ENCODE measurements at regions of chr2 and their contacts with region 1.

Region 1: DNA sequence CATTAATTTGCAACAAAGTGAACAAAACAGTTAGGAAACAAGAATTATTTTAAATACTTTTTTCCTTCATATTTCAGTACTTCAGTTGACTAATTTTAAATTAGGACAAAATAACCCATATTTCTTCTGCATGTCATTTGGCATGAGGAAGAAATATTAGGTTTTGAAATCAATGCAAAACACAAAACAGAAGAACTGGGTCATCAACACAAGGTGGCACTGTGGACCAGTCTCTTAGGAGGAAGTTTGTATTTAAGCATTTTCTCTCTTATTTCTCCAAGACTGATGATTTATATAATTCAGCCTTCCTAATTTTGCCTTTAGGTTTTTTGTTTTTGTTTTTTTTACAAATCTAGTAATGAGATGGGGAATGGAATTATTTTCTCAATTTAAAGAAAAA is 352.8 kb upstream of the KCNH7 start:
- DNase-seq: peak; percentile 50
- ATAC-seq: peak; percentile 46; the same call in 1 of the 2 replicates
- H3K4me3 ChIP-seq: no peak overlapping the region
- H3K27ac ChIP-seq: no peak overlapping the region
- H3K4me1 ChIP-seq: no peaks in the 10 kb centered on the region
- H3K27me3 ChIP-seq: no peaks in the 10 kb centered on the region
- CTCF ChIP-seq: peak; percentile 67
- POLR2A ChIP-seq: no peak
- RAD21 ChIP-seq: peak; percentile 73

Region 2: DNA sequence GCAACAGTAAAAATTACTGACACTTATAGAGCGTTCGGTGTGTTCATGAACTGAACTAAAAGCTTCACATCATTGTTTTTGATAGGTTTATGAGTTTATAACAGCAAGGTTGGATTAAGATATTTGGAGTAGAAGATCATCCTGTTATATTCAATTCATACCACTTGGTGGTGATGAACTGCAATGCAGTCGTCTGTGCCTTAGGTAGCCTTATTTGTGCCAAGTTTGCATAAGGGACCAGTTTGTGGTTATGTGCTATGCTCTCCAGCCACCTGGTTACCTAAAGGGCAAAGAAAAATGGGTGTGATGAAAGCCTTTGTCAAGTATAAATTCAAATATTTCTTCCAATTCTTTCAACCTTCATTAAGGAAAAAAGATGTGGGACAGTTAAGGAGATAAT is 201.9 kb before region 1 on chr2:
- CTCF ChIA-PET with region 1: no interaction called
- POLR2A ChIA-PET with region 1: no interaction called
- dilution Hi-C with region 1: no loop called
- in situ Hi-C with region 1: no loop called
- intact Hi-C with region 1: no loop called
- DNase-seq: no peak
- ATAC-seq: no peak
- H3K4me3 ChIP-seq: no peak overlapping the region
- H3K27ac ChIP-seq: no peak overlapping the region
- H3K4me1 ChIP-seq: no peaks in the 10 kb centered on the region
- H3K27me3 ChIP-seq: no peaks in the 10 kb centered on the region
- CTCF ChIP-seq: no peak
- POLR2A ChIP-seq: no peak
- RAD21 ChIP-seq: no peak

Region 3: GRCh38 chr2:163213661-163214389 is 22.5 kb after region 1 on chr2:
- CTCF ChIA-PET with region 1: no interaction called
- POLR2A ChIA-PET with region 1: no interaction called
- dilution Hi-C with region 1: no loop called
- in situ Hi-C with region 1: no loop called
- intact Hi-C with region 1: no loop called
- DNase-seq: peak; percentile 68
- ATAC-seq: peak; percentile 53
- H3K4me3 ChIP-seq: no peak overlapping the region
- H3K27ac ChIP-seq: no peak overlapping the region
- H3K4me1 ChIP-seq: no peaks in the 10 kb centered on the region
- H3K27me3 ChIP-seq: peaks cover under 1% of the 10 kb centered on the region; the same call in 1 of the 2 replicates
- CTCF ChIP-seq: no peak
- POLR2A ChIP-seq: no peak
- RAD21 ChIP-seq: no peak

Region 4: GRCh38 chr2:163735685-163736432 is 544.5 kb after region 1 on chr2 and contains the start of gene FIGN:
- CTCF ChIA-PET with region 1: no interaction called
- POLR2A ChIA-PET with region 1: no interaction called
- dilution Hi-C with region 1: no loop called
- in situ Hi-C with region 1: no loop called
- intact Hi-C with region 1: loop called (anchors 5 kb)
- DNase-seq: peak; percentile 82
- ATAC-seq: peak; percentile 88
- H3K4me3 ChIP-seq: peak within 1 kb of the TSS; percentile 55
- H3K27ac ChIP-seq: peak within 1 kb of the TSS; percentile 81
- H3K4me1 ChIP-seq: peaks cover 2% of the 10 kb centered on the region
- H3K27me3 ChIP-seq: peaks cover 3% of the 10 kb centered on the region; the same call in 1 of the 2 replicates
- CTCF ChIP-seq: no peak
- POLR2A ChIP-seq: peak; percentile 70; the same call in 1 of the 2 replicates
- RAD21 ChIP-seq: no peak
- total RNA-seq, gene FIGN: 0.56 and 0.90 TPM in 2 replicates

Region 5: DNA sequence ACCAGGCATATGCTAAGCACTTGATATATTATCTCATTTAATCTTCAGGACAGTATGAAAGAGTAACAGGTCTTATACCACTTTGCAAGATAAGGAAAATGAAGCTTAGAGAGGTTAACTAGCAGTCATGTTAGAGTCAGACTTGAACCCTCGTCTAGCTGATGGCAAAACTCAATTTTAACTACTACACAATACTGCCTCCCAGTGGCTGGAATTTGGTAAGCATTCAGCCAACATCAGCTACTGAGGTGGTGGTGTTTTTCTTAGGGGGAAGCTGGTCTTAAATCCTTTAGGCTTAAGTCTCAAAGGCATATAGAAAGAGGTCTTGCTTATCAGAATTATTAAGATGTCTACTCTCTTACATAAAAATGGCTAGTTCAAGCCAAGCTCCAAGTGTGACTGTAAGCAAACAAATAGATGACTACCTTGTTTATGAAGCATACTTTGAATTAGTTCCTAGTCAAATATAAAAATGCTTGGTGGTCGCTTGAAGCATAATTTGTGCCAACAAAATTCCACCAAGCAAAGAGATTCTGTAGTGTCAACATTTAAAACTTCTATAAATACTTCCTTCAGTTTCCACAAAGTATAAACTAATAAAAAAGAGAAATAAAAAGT is 869.9 kb after region 1 on chr2:
- CTCF ChIA-PET with region 1: no interaction called
- POLR2A ChIA-PET with region 1: no interaction called
- dilution Hi-C with region 1: no loop called
- in situ Hi-C with region 1: no loop called
- intact Hi-C with region 1: loop called (anchors 2 kb)
- DNase-seq: peak; percentile 21
- ATAC-seq: peak; percentile 59; the same call in 1 of the 2 replicates
- H3K4me3 ChIP-seq: no peak overlapping the region
- H3K27ac ChIP-seq: no peak overlapping the region
- H3K4me1 ChIP-seq: no peaks in the 10 kb centered on the region
- H3K27me3 ChIP-seq: no peaks in the 10 kb centered on the region
- CTCF ChIP-seq: peak; percentile 66
- POLR2A ChIP-seq: no peak
- RAD21 ChIP-seq: peak; percentile 66

Region 6: DNA sequence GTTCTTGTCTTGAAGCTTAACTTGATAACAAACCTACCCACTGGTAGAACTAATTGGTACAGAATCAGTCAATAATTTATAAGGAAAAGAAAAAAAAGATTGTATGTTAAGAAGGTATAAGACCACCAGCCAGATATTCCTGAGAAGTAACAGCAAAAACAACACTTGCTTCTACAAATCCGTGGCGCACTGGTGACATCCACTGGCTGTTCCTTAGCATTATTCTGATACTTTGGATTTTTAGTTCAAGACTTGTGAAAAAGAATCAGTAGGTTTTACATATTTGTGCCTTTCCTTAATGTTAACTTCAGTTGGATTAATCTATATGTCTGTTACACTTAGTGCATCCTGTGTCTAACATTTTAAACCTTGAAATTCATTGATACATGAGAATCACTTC is 1288.1 kb after region 1 on chr2:
- CTCF ChIA-PET with region 1: no interaction called
- POLR2A ChIA-PET with region 1: no interaction called
- dilution Hi-C with region 1: no loop called
- in situ Hi-C with region 1: loop called (anchors 25 kb)
- intact Hi-C with region 1: loop called (anchors 2 kb)
- DNase-seq: peak; percentile 22
- ATAC-seq: no peak
- H3K4me3 ChIP-seq: no peak overlapping the region
- H3K27ac ChIP-seq: no peak overlapping the region
- H3K4me1 ChIP-seq: no peaks in the 10 kb centered on the region
- H3K27me3 ChIP-seq: no peaks in the 10 kb centered on the region
- CTCF ChIP-seq: peak; percentile 53
- POLR2A ChIP-seq: no peak
- RAD21 ChIP-seq: peak; percentile 60